ENCODE measurements at regions of chr13 and their contacts with region 1.

Region 1: GRCh38 chr13:98842864-98843481 is 90.5 kb upstream of the SLC15A1 start:
- DNase-seq: peak; percentile 86
- H3K4me3 ChIP-seq: no peak overlapping the region
- H3K27ac ChIP-seq: no peak overlapping the region
- H3K4me1 ChIP-seq: peaks cover 7% of the 10 kb centered on the region
- H3K27me3 ChIP-seq: no peaks in the 10 kb centered on the region
- CTCF ChIP-seq: peak; percentile 86

Region 2: DNA sequence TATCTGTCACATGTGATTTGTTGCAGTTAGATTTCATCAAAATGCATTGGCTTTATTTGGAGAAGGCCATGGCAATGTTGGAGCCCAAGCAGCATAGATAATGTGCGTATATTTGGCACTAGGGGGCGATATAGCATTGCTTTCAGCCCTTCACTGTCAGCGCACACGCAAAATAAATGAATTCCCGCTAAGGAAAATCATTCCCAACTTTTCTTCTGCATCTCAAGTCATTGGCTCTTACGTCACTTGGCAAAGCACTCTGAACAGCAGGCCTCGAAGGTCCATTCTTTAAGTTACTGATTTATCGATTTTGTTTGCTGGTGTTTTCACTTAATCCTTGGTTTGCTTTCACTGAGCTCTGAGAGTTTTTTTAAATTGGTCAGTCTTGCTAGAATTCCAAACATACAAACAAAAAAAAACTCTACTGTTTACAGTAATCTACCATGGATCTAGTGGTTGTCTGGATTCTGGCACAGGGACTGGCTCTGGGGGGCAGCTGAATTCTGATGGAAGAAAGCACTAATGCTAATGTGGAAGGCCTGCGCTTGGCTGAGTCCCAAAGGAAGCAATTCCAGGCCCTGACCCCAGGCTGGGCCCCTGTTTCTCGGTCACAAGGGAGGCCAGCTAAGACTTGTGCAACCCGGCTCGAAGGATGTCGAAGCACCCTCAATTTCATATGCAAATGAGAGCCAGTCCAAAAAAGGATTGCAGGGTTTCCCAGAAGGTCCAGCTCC is 987.2 kb before region 1 on chr13:
- CTCF ChIA-PET with region 1: no interaction called
- POLR2A ChIA-PET with region 1: no interaction called
- intact Hi-C with region 1: loop called (anchors 5 kb)
- DNase-seq: peak; percentile 94
- H3K4me3 ChIP-seq: no peak overlapping the region
- H3K27ac ChIP-seq: peak overlapping the region; percentile 88
- H3K4me1 ChIP-seq: peaks cover 34% of the 10 kb centered on the region
- H3K27me3 ChIP-seq: no peaks in the 10 kb centered on the region
- CTCF ChIP-seq: peak; percentile 88

Region 3: DNA sequence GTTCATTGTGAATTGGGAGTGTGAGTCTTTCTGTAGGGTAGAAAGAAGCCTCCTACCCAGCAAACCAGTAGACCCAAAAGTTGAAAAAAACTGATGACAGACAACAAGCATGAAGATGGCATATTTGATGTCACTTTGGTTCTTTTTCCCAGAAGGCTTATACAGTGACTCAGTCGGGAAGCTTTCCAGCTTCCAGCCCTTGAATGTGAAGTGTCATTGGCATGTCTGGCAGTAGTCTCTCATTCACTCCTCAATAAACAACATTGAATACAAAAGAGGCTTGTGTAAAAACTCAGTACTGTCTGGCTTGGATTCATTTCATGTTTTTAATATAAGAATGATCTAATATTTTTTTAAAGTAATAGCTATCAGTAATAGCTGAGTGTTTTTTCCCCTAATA is 820.8 kb before region 1 on chr13:
- CTCF ChIA-PET with region 1: no interaction called
- POLR2A ChIA-PET with region 1: no interaction called
- intact Hi-C with region 1: loop called (anchors 10 kb)
- DNase-seq: peak; percentile 80
- H3K4me3 ChIP-seq: no peak overlapping the region
- H3K27ac ChIP-seq: peak overlapping the region; percentile 60
- H3K4me1 ChIP-seq: peaks cover 41% of the 10 kb centered on the region
- H3K27me3 ChIP-seq: no peaks in the 10 kb centered on the region
- CTCF ChIP-seq: no peak

Region 4: GRCh38 chr13:98445340-98446233 is 397.4 kb before region 1 on chr13:
- CTCF ChIA-PET with region 1: interaction called, 4 read pairs
- POLR2A ChIA-PET with region 1: no interaction called
- intact Hi-C with region 1: loop called (anchors 1 kb)
- DNase-seq: peak; percentile 74
- H3K4me3 ChIP-seq: no peak overlapping the region
- H3K27ac ChIP-seq: peak overlapping the region; percentile 23
- H3K4me1 ChIP-seq: peaks cover 6% of the 10 kb centered on the region
- H3K27me3 ChIP-seq: no peaks in the 10 kb centered on the region
- CTCF ChIP-seq: peak; percentile 94

Region 5: GRCh38 chr13:98509271-98510155 is 333.5 kb before region 1 on chr13:
- CTCF ChIA-PET with region 1: no interaction called
- POLR2A ChIA-PET with region 1: no interaction called
- intact Hi-C with region 1: no loop called
- DNase-seq: no peak
- H3K4me3 ChIP-seq: no peak overlapping the region
- H3K27ac ChIP-seq: no peak overlapping the region
- H3K4me1 ChIP-seq: peaks cover 31% of the 10 kb centered on the region
- H3K27me3 ChIP-seq: no peaks in the 10 kb centered on the region
- CTCF ChIP-seq: no peak

Region 6: GRCh38 chr13:98672944-98673545 is 169.9 kb before region 1 on chr13:
- CTCF ChIA-PET with region 1: interaction called, 6 read pairs
- POLR2A ChIA-PET with region 1: no interaction called
- intact Hi-C with region 1: loop called (anchors 5 kb)
- DNase-seq: peak; percentile 75
- H3K4me3 ChIP-seq: no peak overlapping the region
- H3K27ac ChIP-seq: no peak overlapping the region
- H3K4me1 ChIP-seq: no peaks in the 10 kb centered on the region
- H3K27me3 ChIP-seq: no peaks in the 10 kb centered on the region
- CTCF ChIP-seq: peak; percentile 86

Region 7: GRCh38 chr13:98998831-98999638 is 156.1 kb after region 1 on chr13:
- CTCF ChIA-PET with region 1: no interaction called
- POLR2A ChIA-PET with region 1: no interaction called
- intact Hi-C with region 1: no loop called
- DNase-seq: no peak
- H3K4me3 ChIP-seq: no peak overlapping the region
- H3K27ac ChIP-seq: no peak overlapping the region
- H3K4me1 ChIP-seq: no peaks in the 10 kb centered on the region
- H3K27me3 ChIP-seq: no peaks in the 10 kb centered on the region
- CTCF ChIP-seq: no peak

Region 8: GRCh38 chr13:99033814-99034213 is 190.8 kb after region 1 on chr13:
- CTCF ChIA-PET with region 1: interaction called, 13 read pairs
- POLR2A ChIA-PET with region 1: no interaction called
- intact Hi-C with region 1: loop called (anchors 5 kb)
- DNase-seq: peak; percentile 61
- H3K4me3 ChIP-seq: no peak overlapping the region
- H3K27ac ChIP-seq: no peak overlapping the region
- H3K4me1 ChIP-seq: no peaks in the 10 kb centered on the region
- H3K27me3 ChIP-seq: no peaks in the 10 kb centered on the region
- CTCF ChIP-seq: peak; percentile 68

Region 9: DNA sequence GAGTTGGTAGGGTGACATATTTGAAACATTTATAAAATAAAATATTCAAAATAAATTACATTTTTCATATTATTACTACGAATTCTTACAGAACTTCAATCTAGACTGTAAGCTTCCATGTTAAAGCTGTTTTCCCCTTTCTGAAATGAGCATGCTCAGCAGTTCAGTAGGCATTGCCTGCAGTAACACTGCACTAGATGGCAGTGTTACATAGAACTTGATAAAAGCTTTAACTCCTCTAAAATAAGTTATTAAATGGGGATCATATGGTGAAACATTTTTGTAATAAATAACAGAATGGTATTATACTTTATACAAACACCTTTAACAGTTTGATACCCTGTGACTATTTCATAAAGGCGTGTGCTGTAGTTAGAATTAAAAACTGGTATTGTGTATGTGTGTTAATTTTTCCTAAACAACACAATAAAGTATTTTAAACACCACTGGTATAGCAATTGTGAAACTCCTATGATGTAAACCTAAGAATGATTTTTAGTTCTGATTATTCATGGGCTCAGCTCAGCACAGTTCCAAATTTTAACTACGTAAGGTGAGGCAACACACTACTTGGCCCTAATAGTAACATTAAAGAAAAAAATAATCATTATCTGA is 426.8 kb after region 1 on chr13:
- CTCF ChIA-PET with region 1: no interaction called
- POLR2A ChIA-PET with region 1: no interaction called
- intact Hi-C with region 1: loop called (anchors 10 kb)
- DNase-seq: peak; percentile 51
- H3K4me3 ChIP-seq: no peak overlapping the region
- H3K27ac ChIP-seq: no peak overlapping the region
- H3K4me1 ChIP-seq: no peaks in the 10 kb centered on the region
- H3K27me3 ChIP-seq: no peaks in the 10 kb centered on the region
- CTCF ChIP-seq: peak; percentile 68

Measured in A673 (cell line).